ENCODE measurements at regions of chr1 and their contacts with region 1.

Region 1: GRCh38 chr1:27455139-27455811 is 34.7 kb downstream of the WASF2 start:
- DNase-seq: peak in 7 of 9 experiments; percentile 20 to 60 (median 35)
- ATAC-seq: peak; percentile 74
- H3K4me3 ChIP-seq: peak overlapping the region in 1 of 2 experiments; percentile 12
- H3K4me3 Mint-ChIP-seq: peak overlapping the region; percentile 52
- H3K27ac ChIP-seq: peak overlapping the region in 1 of 2 experiments; percentile 62
- H3K27ac Mint-ChIP-seq: peak overlapping the region; percentile 89
- H3K4me1 ChIP-seq: peaks cover 56% of the 10 kb centered on the region
- H3K4me1 Mint-ChIP-seq: peaks cover 59% of the 10 kb centered on the region
- H3K27me3 ChIP-seq: no peaks in the 10 kb centered on the region
- H3K27me3 Mint-ChIP-seq: no peaks in the 10 kb centered on the region
- CTCF ChIP-seq: no peak

Region 2: GRCh38 chr1:27416387-27417111 is 38.7 kb before region 1 on chr1:
- CTCF ChIA-PET with region 1: no interaction called
- POLR2A ChIA-PET with region 1: interaction called, 3 read pairs
- intact Hi-C with region 1: loop called in 1 of 2 experiments (anchors 5 kb)
- DNase-seq: peak in 6 of 9 experiments; percentile 30 to 81 (median 57)
- ATAC-seq: peak; percentile 74
- H3K4me3 ChIP-seq: no peak overlapping the region
- H3K4me3 Mint-ChIP-seq: no peak overlapping the region
- H3K27ac ChIP-seq: no peak overlapping the region
- H3K27ac Mint-ChIP-seq: peak overlapping the region; percentile 37
- H3K4me1 ChIP-seq: peaks cover 19% of the 10 kb centered on the region
- H3K4me1 Mint-ChIP-seq: peaks cover 33% of the 10 kb centered on the region
- H3K27me3 ChIP-seq: no peaks in the 10 kb centered on the region
- H3K27me3 Mint-ChIP-seq: no peaks in the 10 kb centered on the region
- CTCF ChIP-seq: peak; percentile 56

Measured in CD8-positive, alpha-beta T cell (primary cell).